Activated CD4-positive, alpha-beta T cell treated with anti-CD3 and anti-CD28 coated beads for 36 hours (primary cell): ENCODE measurements at regions of chr3 and their contacts with region 1.

Region 1: GRCh38 chr3:106428565-106428994 is 559.8 kb upstream of the CBLB start:
- DNase-seq: peak; percentile 73
- ATAC-seq: peak; percentile 82
- H3K4me3 Mint-ChIP-seq: no peak overlapping the region
- H3K27ac Mint-ChIP-seq: peak overlapping the region; percentile 98
- H3K4me1 Mint-ChIP-seq: peaks cover 49% of the 10 kb centered on the region
- H3K27me3 Mint-ChIP-seq: no peaks in the 10 kb centered on the region

Region 2: GRCh38 chr3:105747060-105747541 is 681.5 kb before region 1 on chr3:
- CTCF ChIA-PET with region 1: no interaction called
- POLR2A ChIA-PET with region 1: no interaction called
- intact Hi-C with region 1: loop called (anchors 10 kb)
- DNase-seq: no peak
- ATAC-seq: peak; percentile 88
- H3K4me3 Mint-ChIP-seq: peak overlapping the region; percentile 50
- H3K27ac Mint-ChIP-seq: peak overlapping the region; percentile 91
- H3K4me1 Mint-ChIP-seq: peaks cover 69% of the 10 kb centered on the region
- H3K27me3 Mint-ChIP-seq: no peaks in the 10 kb centered on the region

Region 3: GRCh38 chr3:106119614-106120082 is 308.9 kb before region 1 on chr3:
- CTCF ChIA-PET with region 1: no interaction called
- POLR2A ChIA-PET with region 1: no interaction called
- intact Hi-C with region 1: loop called (anchors 1 to 10 kb)
- DNase-seq: peak; percentile 28
- ATAC-seq: peak; percentile 99
- H3K4me3 Mint-ChIP-seq: no peak overlapping the region
- H3K27ac Mint-ChIP-seq: peak overlapping the region; percentile 83
- H3K4me1 Mint-ChIP-seq: peaks cover 26% of the 10 kb centered on the region
- H3K27me3 Mint-ChIP-seq: no peaks in the 10 kb centered on the region

Region 4: DNA sequence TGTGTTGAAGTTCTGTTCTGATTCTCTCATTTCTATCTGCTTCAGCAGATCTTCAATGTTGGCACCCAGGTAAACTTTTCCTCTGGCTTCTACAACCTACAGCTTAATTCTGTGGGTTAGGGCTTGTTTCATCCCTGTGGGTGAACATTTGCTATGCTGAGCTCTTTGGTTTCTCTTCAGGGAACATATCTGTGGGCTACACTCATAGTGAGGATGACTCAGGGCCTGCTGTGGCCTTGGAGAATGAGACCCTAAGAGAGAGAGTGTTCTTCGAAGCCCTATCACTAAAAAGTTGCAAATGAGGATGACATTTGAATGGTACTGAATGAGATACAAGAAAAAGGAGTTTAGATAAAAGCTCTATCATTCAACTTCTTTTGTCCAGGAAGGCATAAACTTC is 213.5 kb before region 1 on chr3:
- CTCF ChIA-PET with region 1: no interaction called
- POLR2A ChIA-PET with region 1: interaction called, 4 read pairs
- intact Hi-C with region 1: loop called in 1 of 2 experiments (anchors 2 kb)
- DNase-seq: peak; percentile 62
- ATAC-seq: peak; percentile 91
- H3K4me3 Mint-ChIP-seq: no peak overlapping the region
- H3K27ac Mint-ChIP-seq: peak overlapping the region; percentile 73
- H3K4me1 Mint-ChIP-seq: peaks cover 59% of the 10 kb centered on the region
- H3K27me3 Mint-ChIP-seq: no peaks in the 10 kb centered on the region

Region 5: DNA sequence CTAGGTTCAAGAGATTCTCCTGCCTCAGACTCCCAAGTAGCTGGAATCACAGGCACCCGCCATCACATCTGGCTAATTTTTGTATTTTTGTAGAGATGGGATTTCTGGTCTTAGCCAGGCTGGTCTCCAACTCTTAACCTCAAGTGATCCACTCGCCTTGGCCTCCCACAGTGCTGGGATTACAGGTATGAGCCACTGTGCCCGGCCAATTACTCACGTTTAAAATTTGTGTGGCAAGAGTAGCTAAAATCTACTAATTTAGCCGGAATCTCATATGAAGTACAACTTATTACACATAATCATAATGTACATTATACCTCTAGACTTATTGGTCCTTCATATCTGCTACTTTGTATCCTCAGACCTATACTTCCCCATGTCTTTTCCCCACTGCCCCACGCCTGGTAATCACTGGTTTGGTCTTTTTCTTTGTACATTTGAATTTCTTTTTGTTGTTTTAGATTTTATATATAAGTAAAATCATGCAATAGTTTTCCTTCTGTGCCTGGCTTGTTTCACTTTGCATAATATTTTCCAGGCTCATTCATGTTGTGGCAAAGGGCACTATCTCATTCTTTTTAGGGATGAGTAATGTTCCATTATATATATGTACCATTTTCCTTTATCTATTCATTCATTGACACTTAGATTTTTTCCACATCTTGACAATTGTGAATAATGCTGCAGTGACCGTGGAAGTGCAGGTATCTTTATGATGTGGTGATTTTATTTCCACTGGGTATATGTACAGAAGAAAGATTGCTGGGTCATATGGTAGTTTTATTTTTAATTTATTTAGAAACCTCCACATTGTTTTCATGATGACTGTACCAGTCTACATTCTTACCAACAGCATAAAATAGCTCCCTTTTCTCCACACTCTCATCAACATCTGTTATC is 45.2 kb after region 1 on chr3:
- CTCF ChIA-PET with region 1: interaction called, 4 read pairs
- POLR2A ChIA-PET with region 1: interaction called, 3 read pairs
- intact Hi-C with region 1: loop called (anchors 1 kb)
- DNase-seq: peak; percentile 47
- ATAC-seq: peak; percentile 86
- H3K4me3 Mint-ChIP-seq: no peak overlapping the region
- H3K27ac Mint-ChIP-seq: peak overlapping the region; percentile 88
- H3K4me1 Mint-ChIP-seq: peaks cover 28% of the 10 kb centered on the region
- H3K27me3 Mint-ChIP-seq: no peaks in the 10 kb centered on the region